Naive thymus-derived CD8-positive, alpha-beta T cell (primary cell): ENCODE measurements at regions of chr11 and their contacts with region 1.

Region 1: DNA sequence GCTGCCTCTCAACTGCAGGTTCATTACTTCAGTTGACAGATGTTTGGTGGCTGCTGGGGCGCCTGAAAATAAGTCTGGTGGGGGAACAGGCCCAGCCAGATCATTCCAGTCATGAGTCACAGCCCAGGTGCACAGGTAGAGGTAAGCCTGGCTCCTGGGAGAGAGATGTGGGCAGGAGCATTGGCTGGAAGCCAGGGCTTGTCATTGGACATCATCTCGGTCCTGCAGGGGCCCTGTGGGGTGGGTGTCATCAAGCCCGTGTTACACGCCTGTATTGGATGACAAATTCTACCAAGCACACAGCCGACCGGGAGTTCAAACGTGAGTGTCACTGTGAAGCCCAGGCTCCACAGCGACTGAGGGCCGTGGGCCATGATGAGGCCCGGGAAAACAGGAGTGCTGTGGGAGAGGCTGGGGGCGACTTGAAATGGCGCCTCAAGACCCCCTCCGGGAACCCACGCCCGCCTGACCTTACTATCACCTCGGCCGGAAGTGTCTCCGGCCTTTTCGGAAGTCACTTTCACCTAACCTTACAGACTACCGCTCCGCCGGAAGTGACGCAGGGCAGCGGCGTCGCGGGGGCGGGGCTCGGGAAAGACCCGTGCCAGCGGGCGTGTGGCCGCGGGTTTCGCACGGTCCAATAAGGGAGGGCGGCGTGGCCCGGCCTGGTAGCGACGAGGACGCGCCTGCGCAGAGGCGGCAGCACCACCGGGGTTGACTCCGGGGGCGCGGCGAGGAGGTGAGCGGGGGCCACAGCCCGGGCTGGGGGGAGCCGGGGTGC is at the start of gene FKBP2:
- DNase-seq: peak; percentile 96 to 99 (median 98)
- ATAC-seq: peak; percentile 73 to 75
- H3K4me3 Mint-ChIP-seq: peak within 1 kb of the TSS; percentile 86 to 96 (median 93)
- H3K27ac Mint-ChIP-seq: peak within 1 kb of the TSS; percentile 96 to 100 (median 99)
- H3K4me1 Mint-ChIP-seq: peaks cover 12 to 47% (median 40%) of the 10 kb centered on the region in 4 donors
- H3K27me3 Mint-ChIP-seq: no peaks in the 10 kb centered on the region
- polyA plus RNA-seq, gene FKBP2: 84.9 to 91.8 (median 85.5) TPM

Region 2: DNA sequence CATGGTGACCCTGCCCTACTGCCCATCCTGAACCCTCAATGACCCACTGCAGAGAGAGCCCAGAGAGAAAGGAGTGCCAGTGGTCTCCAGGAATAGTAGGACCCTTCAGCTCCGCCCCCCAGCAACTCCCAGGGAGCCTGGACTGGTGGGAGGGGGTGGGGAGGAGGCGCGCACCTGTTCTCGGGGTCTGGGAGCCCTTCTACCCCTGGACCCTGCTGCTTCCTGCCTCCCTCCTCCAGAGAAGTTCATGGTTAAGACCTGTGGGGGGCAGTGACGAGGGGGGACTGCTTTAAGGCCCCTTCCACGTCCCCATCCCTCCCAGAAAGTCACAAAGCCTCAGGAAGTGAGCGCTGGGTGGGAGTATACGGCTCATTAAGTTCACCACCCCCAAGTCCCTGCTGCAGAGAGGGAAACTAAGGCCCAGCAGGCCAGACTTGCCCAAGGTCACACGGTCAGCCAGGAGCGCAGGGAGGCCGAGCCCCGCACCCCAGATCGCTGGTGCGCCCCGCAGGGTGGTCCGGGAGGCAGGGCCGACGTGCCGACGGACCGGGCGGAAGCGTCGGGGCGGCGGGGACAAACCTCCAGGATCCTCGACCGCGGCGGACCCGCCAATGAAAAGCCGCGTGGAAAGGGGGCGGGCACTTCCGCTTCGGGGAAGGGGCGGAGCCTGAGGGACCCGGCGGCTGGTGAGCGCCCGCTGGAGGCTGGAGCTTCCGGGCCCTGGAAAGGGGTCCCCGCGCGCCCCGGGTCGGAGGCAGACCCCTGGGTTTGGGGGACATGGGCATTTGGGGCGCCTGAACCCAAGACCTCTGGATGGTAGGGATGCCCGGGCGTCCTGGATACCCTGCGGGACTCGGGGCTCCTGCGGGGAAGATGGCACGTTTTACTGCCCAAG is 14.7 kb before region 1 on chr11 and contains the starts of genes NUDT22 and TRPT1:
- POLR2A ChIA-PET with region 1: interaction called, 106 read pairs
- DNase-seq: peak; percentile 80 to 93 (median 85)
- ATAC-seq: peak; percentile 69 to 71
- H3K4me3 Mint-ChIP-seq: peak within 1 kb of the TSS; percentile 87 to 95 (median 90)
- H3K27ac Mint-ChIP-seq: peak within 1 kb of the TSS; percentile 83 to 97 (median 92)
- H3K4me1 Mint-ChIP-seq: peaks cover 17 to 41% (median 33%) of the 10 kb centered on the region in 4 donors
- H3K27me3 Mint-ChIP-seq: no peaks in the 10 kb centered on the region
- polyA plus RNA-seq, gene NUDT22: 43.4 to 50.4 (median 48.2) TPM
- polyA plus RNA-seq, gene TRPT1: 47.2 to 54.2 (median 51.4) TPM

Region 3: DNA sequence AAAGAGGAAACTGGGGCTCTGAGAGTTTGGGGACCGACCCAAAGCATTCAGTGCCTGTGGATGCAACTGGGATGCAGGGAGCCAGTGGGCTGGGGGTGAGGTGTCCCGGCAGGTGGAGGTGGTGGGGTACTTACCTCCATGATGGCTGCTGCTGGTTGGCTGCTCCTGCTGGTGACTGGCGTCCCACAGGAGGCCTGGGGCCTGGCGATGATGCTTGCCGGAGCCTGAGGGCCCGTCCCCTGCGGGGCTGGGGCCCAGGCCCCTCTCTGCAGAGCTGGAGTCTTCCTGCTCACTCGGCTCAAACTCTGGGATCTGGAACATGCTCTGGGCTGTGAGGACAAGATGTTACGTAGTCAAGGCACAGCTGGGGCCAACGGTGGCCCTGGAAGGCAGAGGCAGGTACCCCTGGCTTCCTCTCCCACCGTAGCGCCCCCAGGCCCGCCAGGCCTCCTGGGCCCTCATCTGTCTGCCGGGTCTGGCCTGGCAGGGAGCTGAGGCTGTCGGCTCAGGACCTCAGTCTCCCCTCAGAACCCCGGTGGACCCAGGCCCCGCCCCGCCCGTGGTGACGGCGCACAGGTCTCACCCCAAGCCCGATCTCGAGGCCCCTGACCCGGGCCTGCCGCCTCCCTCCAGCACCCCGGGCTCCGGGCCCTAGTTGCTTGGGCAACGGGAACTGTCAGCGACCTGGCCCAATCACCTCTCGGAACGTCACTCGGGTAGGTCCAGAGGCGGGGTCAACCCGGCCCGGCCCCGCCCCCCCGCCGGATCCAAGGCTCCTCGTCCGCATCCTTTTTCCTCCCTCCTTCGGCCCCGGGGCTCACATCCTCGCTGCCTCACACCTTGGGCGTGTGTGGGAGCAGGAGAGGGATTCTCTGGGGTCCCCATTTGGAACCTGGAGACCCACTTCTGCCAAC is 43.7 kb after region 1 on chr11 and contains the start of gene BAD:
- POLR2A ChIA-PET with region 1: interaction called, 17 read pairs
- DNase-seq: peak; percentile 86 to 96 (median 88)
- ATAC-seq: peak; percentile 78 to 79
- H3K4me3 Mint-ChIP-seq: peak within 1 kb of the TSS; percentile 85 to 94 (median 90)
- H3K27ac Mint-ChIP-seq: peak within 1 kb of the TSS; percentile 74 to 99 (median 97)
- H3K4me1 Mint-ChIP-seq: peaks cover 8 to 29% (median 21%) of the 10 kb centered on the region in 4 donors
- H3K27me3 Mint-ChIP-seq: no peaks in the 10 kb centered on the region
- polyA plus RNA-seq, gene BAD: 39.1 to 44.8 (median 39.9) TPM

Region 4: DNA sequence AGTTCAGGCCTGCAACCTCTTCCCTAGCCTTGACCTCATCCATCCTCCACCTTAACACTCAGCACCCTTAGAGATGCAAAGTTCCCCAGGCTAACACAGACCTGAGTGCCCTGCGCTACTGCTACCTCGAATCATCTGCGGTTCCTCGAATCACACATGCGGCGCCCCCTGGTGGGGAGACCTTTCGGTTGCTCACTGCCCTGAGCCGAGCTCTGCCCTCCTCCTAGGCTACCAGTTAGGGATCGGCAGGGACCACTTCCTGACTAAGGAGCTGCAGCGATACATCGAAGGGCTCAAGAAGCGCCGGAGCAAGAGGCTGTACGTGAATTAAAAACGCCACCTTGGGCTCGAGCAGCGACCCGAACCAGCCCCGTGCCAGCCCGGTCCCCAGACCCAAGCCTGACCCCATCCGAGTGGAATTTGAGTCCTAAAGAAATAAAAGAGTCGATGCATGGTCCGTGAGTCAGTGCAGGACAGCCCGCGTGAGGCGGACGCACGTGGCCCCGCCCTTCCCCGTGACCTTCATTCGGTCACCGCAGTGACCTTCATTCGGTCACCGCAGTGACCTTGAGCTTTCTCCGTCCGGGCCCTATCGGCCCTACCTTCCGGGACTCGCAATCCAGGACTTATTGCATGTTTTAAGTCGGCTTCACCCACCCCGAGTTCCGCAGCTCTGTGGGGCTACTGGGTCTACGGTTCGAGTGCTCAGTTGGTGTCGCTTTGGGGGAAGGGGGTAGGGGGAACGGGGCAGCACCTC is 63.9 kb after region 1 on chr11:
- POLR2A ChIA-PET with region 1: interaction called, 11 read pairs
- DNase-seq: peak; percentile 83 to 95 (median 90)
- ATAC-seq: peak; percentile 33 to 39
- H3K4me3 Mint-ChIP-seq: peak overlapping the region; percentile 85 to 97 (median 93)
- H3K27ac Mint-ChIP-seq: peak overlapping the region; percentile 87 to 98 (median 95)
- H3K4me1 Mint-ChIP-seq: peaks cover 22 to 47% (median 43%) of the 10 kb centered on the region in 4 donors
- H3K27me3 Mint-ChIP-seq: peaks cover 12 to 18% (median 14%) of the 10 kb centered on the region in 5 donors

Region 5: GRCh38 chr11:64358907-64359711 is 118.5 kb after region 1 on chr11 and contains the start of gene RPS6KA4:
- POLR2A ChIA-PET with region 1: no interaction called
- DNase-seq: peak in 5 of 10 donors; percentile 35 to 42 (median 38)
- ATAC-seq: peak; percentile 68 to 83
- H3K4me3 Mint-ChIP-seq: peak within 1 kb of the TSS; percentile 86 to 95 (median 92)
- H3K27ac Mint-ChIP-seq: peak within 1 kb of the TSS; percentile 41 to 89 (median 80)
- H3K4me1 Mint-ChIP-seq: peaks cover 11 to 39% (median 32%) of the 10 kb centered on the region in 4 donors
- H3K27me3 Mint-ChIP-seq: no peaks in the 10 kb centered on the region
- polyA plus RNA-seq, gene RPS6KA4: 4.3 to 5.1 (median 5.1) TPM